MCF 10A (cell line): ENCODE measurements at regions of chr16 and their contacts with region 1.

Region 1: DNA sequence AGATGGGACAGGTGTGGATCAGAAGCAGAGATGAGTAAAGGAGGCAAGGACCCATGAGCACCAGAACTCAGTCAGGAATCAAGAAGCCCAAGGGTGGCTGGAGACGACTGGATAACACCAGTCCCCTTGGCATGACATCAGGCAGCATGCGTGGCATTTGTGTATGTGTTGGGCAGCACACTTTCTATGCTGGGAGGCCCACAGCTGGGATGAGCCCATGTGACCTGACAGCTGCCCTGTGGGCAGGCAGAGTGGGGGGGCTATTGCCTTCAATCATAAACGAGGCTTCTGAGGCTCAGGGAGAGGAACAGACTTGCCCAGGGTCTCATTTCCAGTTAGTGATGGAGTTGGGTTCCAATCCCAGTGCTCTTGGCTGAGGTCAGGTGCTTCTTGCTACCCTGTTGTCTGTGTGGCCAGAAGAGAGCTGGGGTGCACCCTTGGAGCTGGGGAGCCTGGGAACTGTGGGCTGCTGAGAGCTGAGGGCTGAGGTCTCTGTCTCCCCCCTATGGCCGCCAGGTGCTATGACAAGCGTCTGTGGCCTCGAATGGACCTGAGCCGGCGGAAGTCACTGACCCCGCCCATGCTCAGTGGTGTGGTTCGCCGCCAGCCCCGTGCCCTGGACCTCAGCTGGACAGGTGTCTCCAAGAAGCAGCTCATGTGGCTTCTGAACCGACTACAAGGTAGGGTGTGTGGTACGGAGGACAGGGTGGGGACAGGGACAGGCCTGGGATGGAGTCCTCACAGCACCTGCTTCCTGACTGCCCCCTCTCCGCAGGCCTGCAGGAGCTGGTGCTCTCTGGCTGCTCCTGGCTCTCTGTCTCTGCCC is 7.1 kb upstream of the ORAI3 start:
- DNase-seq: peak; percentile 80
- H3K4me3 Mint-ChIP-seq: no peak overlapping the region
- H3K27ac Mint-ChIP-seq: peak overlapping the region; percentile 97
- H3K4me1 Mint-ChIP-seq: peaks cover 22% of the 10 kb centered on the region
- H3K27me3 Mint-ChIP-seq: no peaks in the 10 kb centered on the region
- CTCF ChIP-seq: peak; percentile 84

Region 2: DNA sequence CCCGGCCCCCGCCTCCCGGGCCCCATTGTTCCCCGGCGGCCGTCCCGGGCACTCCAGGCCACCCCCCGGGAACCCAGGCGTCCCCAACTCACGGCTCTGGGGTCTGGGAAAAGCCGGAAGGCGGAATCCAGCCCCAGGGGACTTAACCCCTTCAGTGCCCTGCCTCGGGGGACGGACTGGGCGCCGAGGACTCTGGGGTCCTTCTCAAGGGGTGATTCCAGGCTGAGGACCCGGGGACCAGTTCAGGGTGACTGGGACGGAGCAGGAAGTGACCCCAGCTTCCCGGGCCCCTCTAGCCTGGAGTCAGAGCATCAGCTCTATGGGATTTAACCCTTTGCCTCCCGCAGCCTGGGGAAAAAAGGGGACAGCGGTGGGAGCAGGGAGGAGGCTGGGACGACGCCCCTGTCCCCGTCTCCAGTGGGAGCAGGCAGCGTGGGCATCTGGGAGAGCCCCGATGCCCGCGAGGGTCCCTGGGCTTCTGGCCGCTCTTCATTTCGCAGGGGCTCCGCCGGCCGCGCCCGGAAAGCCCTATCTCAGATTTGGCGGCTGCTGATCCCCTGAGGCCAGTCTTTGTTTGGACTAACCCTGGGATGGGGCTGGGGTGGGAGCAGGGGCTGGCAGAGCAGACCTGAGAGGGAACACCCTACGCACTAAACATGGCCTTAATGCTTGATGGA is 154.7 kb before region 1 on chr16 and contains the start of gene ZNF629:
- CTCF ChIA-PET with region 1: interaction called, 4 read pairs
- POLR2A ChIA-PET with region 1: no interaction called
- intact Hi-C with region 1: loop called (anchors 10 kb)
- DNase-seq: peak; percentile 59
- H3K4me3 Mint-ChIP-seq: peak within 1 kb of the TSS; percentile 84
- H3K27ac Mint-ChIP-seq: peak within 1 kb of the TSS; percentile 81
- H3K4me1 Mint-ChIP-seq: peaks cover 10% of the 10 kb centered on the region
- H3K27me3 Mint-ChIP-seq: no peaks in the 10 kb centered on the region
- CTCF ChIP-seq: no peak
- total RNA-seq, gene ZNF629: 10.9 and 14.1 TPM in 2 replicates

Region 3: GRCh38 chr16:30874821-30875717 is 66.7 kb before region 1 on chr16:
- CTCF ChIA-PET with region 1: interaction called, 6 read pairs
- POLR2A ChIA-PET with region 1: interaction called, 10 read pairs
- intact Hi-C with region 1: no loop called
- DNase-seq: peak; percentile 85
- H3K4me3 Mint-ChIP-seq: peak overlapping the region; percentile 91
- H3K27ac Mint-ChIP-seq: peak overlapping the region; percentile 72
- H3K4me1 Mint-ChIP-seq: peaks cover 12% of the 10 kb centered on the region
- H3K27me3 Mint-ChIP-seq: no peaks in the 10 kb centered on the region
- CTCF ChIP-seq: no peak

Region 4: DNA sequence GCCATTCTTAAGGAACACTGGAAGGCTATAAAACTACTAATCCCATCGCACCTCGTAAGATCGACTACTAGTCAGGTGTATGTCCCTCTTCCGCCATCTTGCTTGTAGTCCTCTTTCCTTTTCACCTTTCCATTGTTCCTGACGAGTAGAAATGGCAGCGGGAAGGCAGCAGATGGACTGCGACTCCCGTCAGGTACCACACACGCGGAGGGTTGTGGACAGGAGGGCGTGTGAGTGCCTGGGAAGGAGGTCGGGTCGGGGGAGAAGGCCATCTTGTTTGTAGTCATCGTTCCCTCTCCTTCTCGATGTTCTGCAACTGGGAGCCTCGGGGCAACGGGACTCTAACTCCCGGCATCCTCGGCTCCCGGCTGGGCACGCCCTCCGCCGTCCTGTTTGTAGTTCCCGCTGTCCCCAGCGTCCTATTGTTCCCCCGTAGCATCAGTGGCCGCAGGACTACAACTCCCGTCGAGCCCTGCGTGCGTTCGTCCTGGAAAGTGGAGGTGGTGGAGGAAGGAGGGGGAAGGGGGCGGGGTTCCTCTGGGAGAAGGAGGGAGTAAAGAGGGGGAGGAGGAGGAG is 18.8 kb before region 1 on chr16:
- CTCF ChIA-PET with region 1: interaction called, 29 read pairs
- POLR2A ChIA-PET with region 1: interaction called, 5 read pairs
- intact Hi-C with region 1: loop called (anchors 1 kb)
- DNase-seq: peak; percentile 100
- H3K4me3 Mint-ChIP-seq: peak overlapping the region; percentile 98
- H3K27ac Mint-ChIP-seq: peak overlapping the region; percentile 100
- H3K4me1 Mint-ChIP-seq: peaks cover 14% of the 10 kb centered on the region
- H3K27me3 Mint-ChIP-seq: no peaks in the 10 kb centered on the region
- CTCF ChIP-seq: no peak

Region 5: GRCh38 chr16:30956601-30957455 is 15.0 kb after region 1 on chr16:
- CTCF ChIA-PET with region 1: interaction called, 66 read pairs
- POLR2A ChIA-PET with region 1: interaction called, 7 read pairs
- intact Hi-C with region 1: no loop called
- DNase-seq: peak; percentile 84
- H3K4me3 Mint-ChIP-seq: peak overlapping the region; percentile 90
- H3K27ac Mint-ChIP-seq: peak overlapping the region; percentile 92
- H3K4me1 Mint-ChIP-seq: peaks cover 20% of the 10 kb centered on the region
- H3K27me3 Mint-ChIP-seq: no peaks in the 10 kb centered on the region
- CTCF ChIP-seq: peak; percentile 12